Activated CD8-positive, alpha-beta memory T cell treated with anti-CD3 and anti-CD28 coated beads, Interleukin-2, amount 10 ng/mL, durations not matched to agents 7 days and 5 days (primary cell): ENCODE measurements at regions of chr11 and their contacts with region 1.

Region 1: GRCh38 chr11:518463-519250 is 11.6 kb upstream of the RNH1 start:
- DNase-seq: peak; percentile 90
- ATAC-seq: peak; percentile 97
- H3K4me3 Mint-ChIP-seq: peak overlapping the region; percentile 58
- H3K27ac Mint-ChIP-seq: peak overlapping the region; percentile 64
- H3K4me1 Mint-ChIP-seq: peaks cover 6% of the 10 kb centered on the region
- H3K27me3 Mint-ChIP-seq: no peaks in the 10 kb centered on the region

Region 2: DNA sequence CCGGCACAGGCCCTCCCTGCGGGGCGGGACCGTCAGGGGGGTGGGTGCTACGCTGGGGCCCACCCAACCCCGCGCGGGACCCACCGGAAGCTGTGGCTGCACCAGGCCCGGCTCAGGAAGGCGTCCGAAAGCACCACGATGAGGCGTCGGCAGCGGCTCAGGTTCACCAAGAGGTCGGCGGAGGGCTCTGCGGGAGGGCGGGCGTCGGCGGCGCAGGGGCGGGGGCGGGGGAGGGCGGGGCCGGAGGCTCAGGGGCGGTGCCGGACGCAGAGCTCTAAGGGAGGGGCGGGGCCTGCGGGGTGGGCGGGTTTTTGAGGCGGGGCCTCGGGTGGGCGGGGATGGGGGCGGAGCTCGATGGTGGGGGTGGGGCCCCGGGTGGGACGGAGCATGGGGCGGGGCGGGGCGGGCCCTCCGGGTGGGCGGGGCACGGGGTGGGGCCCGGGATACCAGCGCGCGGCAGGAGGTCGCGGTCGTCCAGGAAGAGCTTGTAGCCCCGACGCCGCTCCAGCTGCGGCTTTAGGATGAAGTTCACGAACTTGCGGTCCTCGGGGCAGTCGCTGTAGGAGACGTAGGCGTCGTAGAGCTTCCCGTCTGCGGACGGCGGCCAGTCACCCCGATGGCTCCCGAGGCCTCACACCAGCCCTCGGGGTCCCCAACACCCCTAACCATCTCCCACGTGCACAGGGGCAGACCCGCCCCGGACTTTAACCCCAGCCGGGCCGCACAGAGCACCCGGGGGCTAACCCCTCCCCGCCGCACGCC is 111.5 kb before region 1 on chr11:
- CTCF ChIA-PET with region 1: interaction called, 16 read pairs
- DNase-seq: peak; percentile 95
- ATAC-seq: peak; percentile 91
- H3K4me3 Mint-ChIP-seq: peak overlapping the region; percentile 9
- H3K27ac Mint-ChIP-seq: peak overlapping the region; percentile 49
- H3K4me1 Mint-ChIP-seq: peaks cover 13% of the 10 kb centered on the region
- H3K27me3 Mint-ChIP-seq: no peaks in the 10 kb centered on the region

Region 3: GRCh38 chr11:416757-417621 is 101.7 kb before region 1 on chr11:
- CTCF ChIA-PET with region 1: interaction called, 18 read pairs
- DNase-seq: peak; percentile 73
- ATAC-seq: peak; percentile 57
- H3K4me3 Mint-ChIP-seq: peak overlapping the region; percentile 94
- H3K27ac Mint-ChIP-seq: peak overlapping the region; percentile 90
- H3K4me1 Mint-ChIP-seq: peaks cover 19% of the 10 kb centered on the region
- H3K27me3 Mint-ChIP-seq: no peaks in the 10 kb centered on the region

Region 4: DNA sequence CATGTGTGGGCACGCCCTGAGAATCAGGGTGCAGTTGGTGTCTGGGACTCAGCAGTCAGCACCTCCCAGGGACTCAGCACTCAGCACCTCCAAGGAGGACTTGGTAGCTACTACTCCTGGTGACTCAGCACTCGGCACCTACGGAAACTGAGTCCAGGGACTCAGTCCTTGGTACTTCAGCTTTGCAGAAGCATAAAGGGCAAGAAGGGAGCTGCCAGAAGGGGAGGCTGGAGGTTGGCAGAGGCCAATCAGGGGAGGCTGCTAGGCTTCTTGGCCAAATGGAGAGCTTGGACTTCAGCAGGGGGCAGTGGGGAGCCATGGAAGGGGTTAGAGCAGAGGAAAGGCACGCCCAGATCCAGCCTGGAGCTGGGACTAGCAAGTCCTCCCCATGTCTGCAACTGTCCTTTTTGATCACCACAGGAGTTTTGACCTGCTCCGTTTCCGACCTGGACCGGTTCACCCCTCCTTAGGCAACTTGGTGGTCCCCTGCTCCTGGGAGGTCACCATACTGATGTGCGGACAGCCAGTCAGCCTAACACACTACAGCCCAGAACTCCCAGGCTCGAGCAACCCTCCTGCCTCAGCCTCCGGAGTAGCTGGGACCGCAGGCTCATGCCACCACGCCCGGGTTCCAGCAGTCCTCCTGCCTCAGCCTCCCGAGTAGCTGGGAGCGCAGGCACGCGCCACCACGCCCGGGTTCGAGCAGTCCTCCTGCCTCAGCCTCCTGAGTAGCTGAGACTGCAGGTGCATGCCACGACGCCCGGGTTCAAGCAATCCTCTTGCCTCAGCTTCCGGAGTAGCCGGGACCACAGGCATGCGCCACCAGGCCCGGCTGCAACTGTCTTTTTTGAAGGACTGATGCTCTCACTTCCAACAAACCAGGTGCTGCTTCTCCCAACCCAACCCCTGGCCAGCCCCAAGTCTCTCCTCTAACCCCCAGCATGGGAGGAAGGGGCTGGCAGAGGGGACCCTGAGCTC is 78.3 kb before region 1 on chr11:
- CTCF ChIA-PET with region 1: interaction called, 13 read pairs
- DNase-seq: no peak
- ATAC-seq: no peak
- H3K4me3 Mint-ChIP-seq: peak overlapping the region; percentile 68
- H3K27ac Mint-ChIP-seq: no peak overlapping the region
- H3K4me1 Mint-ChIP-seq: peaks cover 39% of the 10 kb centered on the region
- H3K27me3 Mint-ChIP-seq: peaks cover 4% of the 10 kb centered on the region

Region 5: GRCh38 chr11:506238-506994 is 12.2 kb before region 1 on chr11:
- CTCF ChIA-PET with region 1: interaction called, 29 read pairs
- DNase-seq: peak; percentile 98
- ATAC-seq: peak; percentile 80
- H3K4me3 Mint-ChIP-seq: peak overlapping the region; percentile 88
- H3K27ac Mint-ChIP-seq: peak overlapping the region; percentile 96
- H3K4me1 Mint-ChIP-seq: peaks cover 35% of the 10 kb centered on the region
- H3K27me3 Mint-ChIP-seq: no peaks in the 10 kb centered on the region

Region 6: DNA sequence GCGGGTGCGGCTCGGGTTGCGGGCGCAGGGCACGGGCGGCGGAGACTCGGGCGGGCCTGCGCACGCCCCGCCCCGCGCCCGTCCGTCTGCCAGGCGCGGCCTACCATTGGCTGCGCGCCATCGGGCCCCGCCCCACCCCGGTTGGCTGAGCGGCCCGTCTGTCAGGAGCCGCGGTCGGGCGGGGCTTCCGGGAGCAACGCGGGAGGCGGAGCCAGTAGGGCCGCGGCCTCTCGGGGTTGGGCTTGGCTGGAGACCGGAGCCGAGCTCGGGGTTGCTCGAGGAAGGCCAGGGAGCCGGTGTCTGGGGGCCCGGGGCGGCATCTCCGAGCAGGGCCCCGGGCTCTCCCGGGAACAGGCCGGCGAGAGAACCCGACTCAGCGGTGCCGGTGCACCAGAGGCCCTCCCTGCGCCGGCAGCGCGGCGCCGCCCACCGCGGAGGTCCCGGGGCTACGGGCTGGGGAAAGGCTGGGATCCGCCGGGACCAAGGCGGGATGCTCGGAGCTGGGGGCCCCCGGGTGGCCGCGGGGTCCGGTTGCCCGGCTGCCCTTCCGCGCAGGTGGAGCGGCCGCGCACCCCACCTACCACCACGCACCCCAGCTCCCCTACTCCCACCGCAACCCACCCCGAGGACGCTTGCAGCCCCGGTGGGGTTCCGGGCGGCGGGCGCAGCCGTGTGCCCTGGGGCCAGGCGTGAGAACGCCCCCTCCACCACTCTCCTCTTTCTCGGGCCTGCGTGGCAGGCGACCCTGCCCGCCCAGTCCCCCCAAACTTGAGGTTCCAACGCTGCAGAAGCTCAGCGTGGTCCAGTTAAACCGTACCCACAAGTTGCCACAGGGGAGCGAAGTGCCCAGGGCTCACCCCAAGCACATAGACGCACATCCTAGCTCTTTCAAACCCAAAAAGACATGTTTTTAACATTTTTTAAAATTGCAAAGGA is 17.1 kb after region 1 on chr11 and contains the start of gene HRAS:
- CTCF ChIA-PET with region 1: interaction called, 27 read pairs
- DNase-seq: peak; percentile 96
- ATAC-seq: peak; percentile 88
- H3K4me3 Mint-ChIP-seq: peak within 1 kb of the TSS; percentile 81
- H3K27ac Mint-ChIP-seq: peak within 1 kb of the TSS; percentile 85
- H3K4me1 Mint-ChIP-seq: peaks cover 22% of the 10 kb centered on the region
- H3K27me3 Mint-ChIP-seq: no peaks in the 10 kb centered on the region
- total RNA-seq, gene HRAS: 50.7 to 53.8 TPM

Region 7: GRCh38 chr11:554824-555472 is 36.3 kb after region 1 on chr11:
- CTCF ChIA-PET with region 1: interaction called, 12 read pairs
- DNase-seq: peak; percentile 82
- ATAC-seq: peak; percentile 83
- H3K4me3 Mint-ChIP-seq: peak overlapping the region; percentile 9
- H3K27ac Mint-ChIP-seq: no peak overlapping the region
- H3K4me1 Mint-ChIP-seq: peaks cover 5% of the 10 kb centered on the region
- H3K27me3 Mint-ChIP-seq: peaks cover 18% of the 10 kb centered on the region